PC-3 (cell line): ENCODE measurements at regions of chr20 and their contacts with region 1.

Region 1: GRCh38 chr20:31835977-31836852 is 9.2 kb downstream of the FOXS1 start:
- DNase-seq: peak; percentile 94
- ATAC-seq: peak; percentile 94
- H3K4me3 ChIP-seq: no peak overlapping the region
- H3K27ac ChIP-seq: no peak overlapping the region
- H3K4me1 ChIP-seq: peaks cover 17% of the 10 kb centered on the region
- H3K27me3 ChIP-seq: no peaks in the 10 kb centered on the region
- CTCF ChIP-seq: no peak

Region 2: DNA sequence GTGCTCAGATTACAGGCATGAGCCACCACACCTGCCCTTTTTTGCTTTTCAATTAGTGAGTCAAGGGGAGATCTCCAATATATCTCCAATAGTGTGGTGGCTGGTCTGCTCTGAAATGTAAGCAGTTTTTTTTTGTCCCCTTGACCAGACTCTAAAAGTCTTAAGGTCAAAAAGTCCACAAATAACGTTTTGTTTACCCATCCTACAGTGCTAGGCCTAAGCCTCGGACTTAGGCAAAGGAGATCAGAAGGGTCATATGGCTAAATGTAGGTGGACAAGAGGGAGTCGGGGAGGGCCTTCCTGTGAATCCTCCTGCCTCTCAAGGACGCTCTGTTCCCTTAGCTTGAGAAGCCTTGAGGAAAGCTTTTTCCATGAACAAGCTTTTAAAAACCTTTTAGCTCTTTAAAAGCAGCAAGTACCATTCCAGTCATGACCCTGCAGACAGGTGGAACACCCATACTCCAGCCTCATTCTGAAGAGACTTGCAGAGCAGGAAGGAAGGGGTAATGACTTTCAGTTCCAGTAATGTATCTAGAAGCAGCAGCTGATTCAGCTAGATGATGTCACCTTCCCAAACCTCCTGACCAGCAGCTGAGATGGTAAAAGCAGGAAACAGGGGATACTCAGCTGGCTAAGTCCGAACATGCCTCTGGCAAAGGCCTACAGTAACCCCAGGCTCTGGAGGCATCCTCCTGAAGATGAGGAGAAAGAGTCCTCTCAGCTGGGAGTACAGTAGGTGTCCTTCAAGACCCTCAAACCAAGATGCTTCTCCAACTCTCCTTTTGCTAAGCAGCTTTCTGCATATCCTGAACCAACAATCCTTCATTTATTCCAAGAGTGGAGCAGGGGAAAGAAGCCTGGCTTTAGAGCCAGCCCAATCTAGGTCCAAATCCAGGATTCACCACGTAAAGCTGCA is 137.2 kb before region 1 on chr20:
- CTCF ChIA-PET with region 1: no interaction called
- POLR2A ChIA-PET with region 1: no interaction called
- intact Hi-C with region 1: no loop called
- DNase-seq: peak; percentile 88
- ATAC-seq: peak; percentile 47
- H3K4me3 ChIP-seq: no peak overlapping the region
- H3K27ac ChIP-seq: peak overlapping the region; percentile 62
- H3K4me1 ChIP-seq: peaks cover 75% of the 10 kb centered on the region
- H3K27me3 ChIP-seq: no peaks in the 10 kb centered on the region
- CTCF ChIP-seq: no peak

Region 3: DNA sequence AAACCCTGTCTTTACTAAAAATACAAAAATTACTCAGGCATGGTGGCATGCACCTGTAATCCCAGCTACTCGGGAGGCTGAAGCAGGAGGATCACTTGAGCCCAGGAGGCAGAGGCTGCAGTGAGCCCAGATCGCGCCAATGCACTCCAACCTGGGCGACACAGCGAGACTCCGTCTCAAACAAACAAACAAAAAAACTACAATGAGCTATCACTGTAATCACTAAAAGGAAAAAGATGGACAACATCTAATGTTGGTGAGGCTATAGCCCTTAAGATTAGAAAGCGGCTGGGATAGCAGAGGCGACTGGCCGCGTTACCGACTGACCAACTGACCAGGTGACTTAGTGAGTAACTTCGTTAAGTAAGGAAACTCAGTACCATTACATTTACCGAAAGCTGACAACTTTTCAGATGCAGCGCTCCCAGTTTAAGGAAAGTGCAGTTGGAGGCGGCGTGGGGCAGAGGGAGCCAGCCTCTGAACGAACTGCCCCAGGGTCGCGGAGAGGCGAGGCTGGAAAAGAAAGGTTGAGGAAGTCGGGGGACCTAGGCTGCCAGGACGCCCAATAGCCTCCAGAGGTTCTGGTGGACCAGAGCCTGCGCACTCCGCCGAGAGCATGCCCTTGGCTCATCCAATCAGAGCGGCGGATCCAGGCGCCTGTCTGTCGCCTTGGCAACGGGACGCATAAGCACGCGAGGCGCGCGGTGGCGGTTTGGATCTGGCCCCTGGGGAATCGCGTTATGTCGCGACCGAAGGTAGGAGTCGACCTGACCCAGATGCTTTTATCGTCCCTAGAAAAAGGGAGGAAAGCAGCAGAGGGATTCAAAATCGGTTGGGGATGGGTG is 43.1 kb after region 1 on chr20:
- CTCF ChIA-PET with region 1: no interaction called
- POLR2A ChIA-PET with region 1: interaction called, 8 read pairs
- intact Hi-C with region 1: loop called (anchors 1 kb)
- DNase-seq: peak; percentile 94
- ATAC-seq: peak; percentile 99
- H3K4me3 ChIP-seq: peak overlapping the region; percentile 79
- H3K27ac ChIP-seq: no peak overlapping the region
- H3K4me1 ChIP-seq: 0 out of 2 replicates have a peak, but pooled peaks cover 9% of the 10 kb centered on the region
- H3K27me3 ChIP-seq: no peaks in the 10 kb centered on the region
- CTCF ChIP-seq: no peak